ENCODE measurements at regions of chr4 and their contacts with region 1.

Region 1: GRCh38 chr4:16264798-16265197 is 38.5 kb upstream of the TAPT1 start:
- DNase-seq: no peak
- H3K4me3 ChIP-seq: no peak overlapping the region
- H3K27ac ChIP-seq: no peak overlapping the region
- H3K4me1 ChIP-seq: no peaks in the 10 kb centered on the region
- H3K27me3 ChIP-seq: peaks cover 0 to 1% (median 0%) of the 10 kb centered on the region in 4 experiments; a peak in 1 of 7 replicates
- CTCF ChIP-seq: peak in 2 of 3 experiments; percentile 25 to 41; a peak in 2 of 4 replicates
- EP300 ChIP-seq: no peak
- POLR2A ChIP-seq: no peak
- RAD21 ChIP-seq: peak; percentile 65 to 69

Region 2: GRCh38 chr4:15963001-15963451 is 301.8 kb before region 1 on chr4 and contains the start of gene FGFBP2:
- CTCF ChIA-PET with region 1: interaction called, 19 read pairs
- POLR2A ChIA-PET with region 1: no interaction called
- DNase-seq: peak in 1 of 2 experiments; percentile 78
- H3K4me3 ChIP-seq: no peak within 1 kb of the TSS
- H3K27ac ChIP-seq: no peak within 1 kb of the TSS
- H3K4me1 ChIP-seq: peaks cover 0 to 2% (median under 1%) of the 10 kb centered on the region in 4 experiments; a peak in 4 of 7 replicates
- H3K27me3 ChIP-seq: no peaks in the 10 kb centered on the region
- CTCF ChIP-seq: peak; percentile 74 to 89 (median 82)
- EP300 ChIP-seq: no peak
- POLR2A ChIP-seq: no peak
- RAD21 ChIP-seq: peak; percentile 81 to 83
- total RNA-seq, gene FGFBP2: not detected in 2 replicates

Measured in H1 (cell line).